ENCODE measurements at regions of chr14 and their contacts with region 1.

Region 1: DNA sequence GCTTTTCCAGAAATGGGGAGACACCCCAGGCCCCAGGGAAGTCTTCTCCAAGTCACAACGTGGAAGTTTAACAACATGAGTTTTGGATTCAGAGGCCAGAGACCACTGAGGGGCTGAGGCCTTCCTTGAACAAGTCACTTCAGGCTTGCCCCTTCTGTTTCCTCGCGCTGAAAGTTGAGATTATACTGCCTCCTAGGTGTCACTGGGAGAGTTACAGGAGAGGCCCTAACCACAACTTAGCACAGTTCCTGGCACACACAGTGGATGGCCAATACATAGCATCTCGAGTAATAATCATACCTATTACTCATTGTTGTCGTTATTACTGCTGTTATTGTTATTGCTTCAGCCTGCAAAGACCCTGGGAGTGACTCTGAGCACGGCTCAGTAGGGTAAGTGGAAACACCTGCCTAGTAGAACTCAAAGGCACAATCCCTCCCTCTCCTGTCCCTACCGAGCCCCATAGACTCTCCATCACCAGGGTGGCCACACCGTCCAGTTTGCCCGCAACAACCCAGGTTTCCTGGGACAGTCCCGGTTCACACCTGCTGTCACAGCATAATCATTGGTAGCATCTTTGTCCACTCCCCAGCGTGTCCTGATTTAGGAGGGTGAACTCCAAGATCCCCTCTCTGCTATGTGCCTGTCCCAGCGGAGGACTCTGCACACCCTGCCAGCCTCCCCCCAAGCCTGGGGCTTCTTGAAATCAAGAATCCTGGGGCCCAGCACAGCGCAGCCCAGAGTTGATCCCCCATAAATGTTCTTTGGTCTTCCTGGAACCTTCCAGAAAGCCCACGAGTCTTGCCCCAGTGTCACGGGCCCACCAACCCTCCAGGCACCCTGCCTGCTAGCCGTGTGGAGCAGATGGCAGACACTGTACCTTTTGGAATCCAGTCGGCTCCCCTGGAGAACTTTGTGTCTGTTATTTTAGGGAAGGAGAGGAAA is 85.0 kb downstream of the SYNE3 start:
- DNase-seq: no peak
- H3K4me3 ChIP-seq: no peak overlapping the region
- H3K27ac ChIP-seq: no peak overlapping the region
- H3K4me1 ChIP-seq: no peaks in the 10 kb centered on the region
- H3K27me3 ChIP-seq: no peaks in the 10 kb centered on the region
- CTCF ChIP-seq: peak; percentile 58

Region 2: DNA sequence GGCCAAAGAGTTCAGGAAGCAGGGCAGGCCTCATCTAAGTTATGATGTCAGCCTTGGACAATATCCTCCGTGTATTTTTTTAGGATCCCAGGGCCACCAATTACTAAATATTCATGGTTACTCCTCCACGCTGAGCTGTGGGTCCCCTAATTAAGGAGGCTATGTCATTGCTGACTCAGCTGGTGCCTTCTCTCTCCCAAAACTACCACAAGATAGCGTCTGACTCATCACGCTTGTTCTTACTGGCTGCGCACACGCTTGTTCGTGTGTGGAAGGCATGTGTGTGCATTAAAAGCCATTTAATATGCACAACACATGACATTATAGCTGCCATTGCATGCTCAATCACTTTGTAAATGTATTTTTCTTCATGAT is 739.8 kb before region 1 on chr14:
- CTCF ChIA-PET with region 1: no interaction called
- POLR2A ChIA-PET with region 1: no interaction called
- intact Hi-C with region 1: loop called (anchors 5 kb)
- DNase-seq: no peak
- H3K4me3 ChIP-seq: no peak overlapping the region
- H3K27ac ChIP-seq: no peak overlapping the region
- H3K4me1 ChIP-seq: no peaks in the 10 kb centered on the region
- H3K27me3 ChIP-seq: peaks cover 10% of the 10 kb centered on the region; the same call in 1 of the 2 replicates
- CTCF ChIP-seq: no peak

Region 3: DNA sequence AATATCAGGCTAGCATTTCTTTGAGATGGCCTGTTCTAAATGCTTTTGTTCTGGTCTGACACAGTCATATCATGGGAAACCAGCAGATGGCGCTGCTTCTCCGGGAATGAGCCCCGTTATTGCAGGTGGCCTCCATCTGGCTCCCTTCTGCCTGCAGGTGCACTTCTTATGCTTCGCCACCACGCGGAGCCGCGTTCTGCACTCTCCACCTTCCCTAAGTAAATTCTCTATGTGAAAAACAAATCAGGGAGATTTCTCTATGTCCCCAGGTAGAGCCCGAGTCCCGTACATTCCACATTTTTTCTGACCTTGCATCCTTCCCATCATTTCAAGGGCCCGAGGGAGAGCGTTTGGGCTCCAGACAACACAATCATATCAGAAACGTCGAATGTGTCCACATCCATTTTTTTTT is 129.5 kb after region 1 on chr14:
- CTCF ChIA-PET with region 1: no interaction called
- POLR2A ChIA-PET with region 1: no interaction called
- intact Hi-C with region 1: no loop called
- DNase-seq: peak; percentile 67 to 68
- H3K4me3 ChIP-seq: no peak overlapping the region
- H3K27ac ChIP-seq: no peak overlapping the region
- H3K4me1 ChIP-seq: no peaks in the 10 kb centered on the region
- H3K27me3 ChIP-seq: no peaks in the 10 kb centered on the region
- CTCF ChIP-seq: peak; percentile 92